ENCODE measurements at regions of chr14 and their contacts with region 1.

Region 1: DNA sequence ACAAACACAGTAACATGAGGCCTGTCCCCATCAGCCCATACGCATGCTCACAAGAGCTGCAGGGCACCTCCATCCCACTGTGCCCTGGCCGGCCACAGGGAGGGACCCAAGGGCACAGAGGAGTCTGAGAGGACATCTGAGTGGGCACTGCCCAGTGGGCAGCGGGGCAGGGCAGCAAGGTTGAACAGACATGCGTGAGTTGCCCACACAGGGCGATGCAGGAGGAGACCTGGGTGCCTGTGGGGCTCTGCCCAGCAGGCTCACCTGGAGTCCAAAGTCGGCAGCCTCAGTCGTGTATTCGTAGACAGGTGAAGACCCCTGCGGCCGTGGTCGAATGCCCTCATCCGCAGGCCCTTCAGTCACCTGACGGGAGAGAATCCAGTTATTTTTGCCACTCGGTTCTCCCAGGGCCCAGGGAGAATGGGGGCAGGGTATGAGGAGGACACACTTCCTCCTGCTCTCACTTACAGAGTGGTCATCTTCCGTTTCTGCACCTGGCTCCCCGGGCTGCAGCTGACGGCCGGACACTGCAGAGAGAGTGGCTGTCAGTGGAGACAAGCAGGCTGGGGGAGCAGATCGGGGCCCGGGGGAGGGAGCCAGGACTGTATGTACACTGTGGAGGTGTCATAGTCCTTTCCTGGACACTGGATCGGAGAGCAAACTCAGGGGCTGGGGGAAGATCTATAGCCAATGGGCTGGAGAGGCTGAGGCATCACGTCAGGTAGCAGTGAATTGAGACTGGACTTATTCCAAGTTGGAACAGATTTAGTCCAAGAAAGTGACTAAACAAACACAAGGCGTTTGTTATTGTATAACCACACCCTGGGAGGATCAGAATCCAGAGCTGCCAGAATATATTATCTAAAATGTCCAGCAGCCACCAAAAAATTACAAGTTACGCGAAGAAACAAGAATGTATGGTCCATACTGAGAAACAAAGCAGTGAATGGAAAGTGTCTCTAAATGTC is 20.7 kb downstream of the AHNAK2 start:
- DNase-seq: no peak
- H3K4me3 ChIP-seq: no peak overlapping the region
- H3K27ac ChIP-seq: no peak overlapping the region
- H3K4me1 ChIP-seq: no peaks in the 10 kb centered on the region
- H3K27me3 ChIP-seq: no peaks in the 10 kb centered on the region
- CTCF ChIP-seq: no peak
- POLR2A ChIP-seq: no peak

Region 2: GRCh38 chr14:104604459-104605449 is 352.7 kb before region 1 on chr14 and contains the start of gene TMEM179:
- CTCF ChIA-PET with region 1: no interaction called
- POLR2A ChIA-PET with region 1: no interaction called
- dilution Hi-C with region 1: no loop called
- intact Hi-C with region 1: no loop called
- DNase-seq: peak; percentile 14
- H3K4me3 ChIP-seq: no peak within 1 kb of the TSS
- H3K27ac ChIP-seq: no peak within 1 kb of the TSS
- H3K4me1 ChIP-seq: no peaks in the 10 kb centered on the region
- H3K27me3 ChIP-seq: peaks cover 0 to 3% of the 10 kb centered on the region in 2 experiments
- CTCF ChIP-seq: no peak
- POLR2A ChIP-seq: no peak
- total RNA-seq, gene TMEM179: not detected in 2 replicates

Region 3: GRCh38 chr14:104856869-104857860 is 100.3 kb before region 1 on chr14:
- CTCF ChIA-PET with region 1: no interaction called
- POLR2A ChIA-PET with region 1: no interaction called
- dilution Hi-C with region 1: no loop called
- intact Hi-C with region 1: no loop called
- DNase-seq: no peak
- H3K4me3 ChIP-seq: no peak overlapping the region
- H3K27ac ChIP-seq: no peak overlapping the region
- H3K4me1 ChIP-seq: no peaks in the 10 kb centered on the region
- H3K27me3 ChIP-seq: peaks cover 0 to 3% of the 10 kb centered on the region in 2 experiments
- CTCF ChIP-seq: no peak
- POLR2A ChIP-seq: no peak

Region 4: GRCh38 chr14:104970231-104971101 is 13.0 kb after region 1 on chr14:
- CTCF ChIA-PET with region 1: interaction called, 5 read pairs
- POLR2A ChIA-PET with region 1: no interaction called
- dilution Hi-C with region 1: no loop called
- intact Hi-C with region 1: loop called (anchors 1 kb)
- DNase-seq: peak; percentile 87
- H3K4me3 ChIP-seq: peak overlapping the region; percentile 24 to 59 (median 41)
- H3K27ac ChIP-seq: peak overlapping the region; percentile 89
- H3K4me1 ChIP-seq: peaks cover 79% of the 10 kb centered on the region
- H3K27me3 ChIP-seq: no peaks in the 10 kb centered on the region
- CTCF ChIP-seq: no peak
- POLR2A ChIP-seq: peak; percentile 74

Region 5: DNA sequence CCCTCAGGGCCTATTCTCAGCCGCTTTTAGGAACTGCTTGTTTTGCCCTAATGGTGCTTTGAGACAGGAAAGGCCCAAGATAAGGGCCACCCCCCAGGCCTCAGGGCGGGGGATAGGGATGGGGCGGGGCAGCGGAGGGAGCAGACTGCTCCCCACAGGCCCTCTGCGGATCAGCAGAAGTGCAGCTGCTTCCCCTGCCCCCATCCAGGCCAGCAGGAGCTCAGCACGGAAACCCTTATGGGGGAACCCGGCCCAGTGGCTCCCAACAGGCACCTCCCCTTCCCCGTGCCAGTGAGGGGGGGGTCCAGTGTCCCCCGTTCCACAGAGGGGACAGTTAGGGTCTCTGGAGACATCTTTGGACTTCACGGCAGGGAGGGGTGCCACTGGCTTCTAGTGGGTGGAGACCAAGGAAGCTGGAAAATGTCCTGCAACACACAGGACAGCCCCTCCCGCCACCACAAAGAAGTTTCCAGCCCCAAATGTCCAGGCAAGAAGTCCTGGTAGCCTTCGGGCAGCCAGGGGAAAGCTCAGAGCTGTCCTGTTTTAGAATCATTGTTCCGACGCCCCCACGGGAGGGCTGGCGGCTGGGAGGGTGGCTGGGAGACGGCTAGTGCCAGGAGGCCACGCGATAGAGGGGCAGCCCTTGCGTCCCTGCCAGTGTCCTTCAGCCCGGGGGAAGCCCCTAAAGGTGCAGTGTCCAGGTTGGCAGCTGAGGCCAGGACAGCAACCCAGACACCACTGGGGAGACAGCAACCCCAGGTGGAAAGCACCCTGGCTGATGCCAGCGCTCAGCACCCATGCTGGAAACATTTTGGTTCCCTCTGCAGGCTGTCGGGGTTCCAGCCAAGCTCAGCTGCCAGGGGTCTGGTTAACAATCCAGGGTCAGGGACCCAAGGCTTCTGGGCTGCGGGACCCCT is 118.2 kb after region 1 on chr14:
- CTCF ChIA-PET with region 1: no interaction called
- POLR2A ChIA-PET with region 1: no interaction called
- dilution Hi-C with region 1: no loop called
- intact Hi-C with region 1: no loop called
- DNase-seq: no peak
- H3K4me3 ChIP-seq: no peak overlapping the region
- H3K27ac ChIP-seq: no peak overlapping the region
- H3K4me1 ChIP-seq: no peaks in the 10 kb centered on the region
- H3K27me3 ChIP-seq: no peaks in the 10 kb centered on the region
- CTCF ChIP-seq: no peak
- POLR2A ChIP-seq: no peak

Measured in endothelial cell of umbilical vein (primary cell).